CD14-positive monocyte (primary cell): ENCODE measurements at regions of chr19 and their contacts with region 1.

Region 1: GRCh38 chr19:56170261-56170660 is 5.5 kb upstream of the GALP start:
- DNase-seq: no peak
- H3K4me3 ChIP-seq: no peak overlapping the region
- H3K4me3 Mint-ChIP-seq: no peak overlapping the region
- H3K27ac ChIP-seq: no peak overlapping the region
- H3K27ac Mint-ChIP-seq: peak overlapping the region in 1 of 7 donors; percentile 38
- H3K4me1 ChIP-seq: no peaks in the 10 kb centered on the region
- H3K4me1 Mint-ChIP-seq: peaks cover 2% of the 10 kb centered on the region
- H3K27me3 ChIP-seq: no peaks in the 10 kb centered on the region
- H3K27me3 Mint-ChIP-seq: peaks cover 11 to 25% (median 12%) of the 10 kb centered on the region in 3 donors
- CTCF ChIP-seq: no peak

Region 2: DNA sequence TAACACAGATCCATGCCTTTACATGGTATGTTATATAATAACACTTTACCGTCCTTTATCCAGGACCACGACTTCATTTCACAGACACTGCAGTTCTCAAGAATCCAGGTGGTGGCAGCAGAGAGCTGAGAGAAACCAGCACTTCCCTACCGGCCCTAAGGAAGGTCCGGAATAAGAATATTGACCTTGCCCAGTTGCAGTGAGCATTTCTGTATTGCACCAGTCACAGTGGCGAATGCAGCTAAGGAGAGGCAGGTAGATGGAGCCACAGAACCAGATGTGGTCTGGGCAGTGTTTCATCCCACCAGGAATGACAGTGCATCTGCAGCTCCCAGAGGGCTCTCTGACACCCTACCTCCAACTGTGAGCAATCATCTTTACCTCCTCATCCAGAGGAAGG is 93.8 kb before region 1 on chr19:
- intact Hi-C with region 1: loop called (anchors 2 kb)
- DNase-seq: peak; percentile 34 to 56 (median 56)
- H3K4me3 ChIP-seq: no peak overlapping the region
- H3K4me3 Mint-ChIP-seq: no peak overlapping the region
- H3K27ac ChIP-seq: no peak overlapping the region
- H3K27ac Mint-ChIP-seq: no peak overlapping the region
- H3K4me1 ChIP-seq: peaks cover 9% of the 10 kb centered on the region in 2 donors
- H3K4me1 Mint-ChIP-seq: peaks cover 9% of the 10 kb centered on the region
- H3K27me3 ChIP-seq: no peaks in the 10 kb centered on the region
- H3K27me3 Mint-ChIP-seq: peaks cover 5 to 20% (median 11%) of the 10 kb centered on the region in 3 donors
- CTCF ChIP-seq: peak; percentile 94

Region 3: GRCh38 chr19:56105090-56105701 is 65.1 kb before region 1 on chr19:
- intact Hi-C with region 1: loop called in 1 of 2 experiments (anchors 2 kb)
- DNase-seq: peak; percentile 59 to 74 (median 62)
- H3K4me3 ChIP-seq: no peak overlapping the region
- H3K4me3 Mint-ChIP-seq: peak overlapping the region in 1 of 2 donors; percentile 24
- H3K27ac ChIP-seq: peak overlapping the region; percentile 37 to 66
- H3K27ac Mint-ChIP-seq: peak overlapping the region in 6 of 7 donors; percentile 13 to 81 (median 57)
- H3K4me1 ChIP-seq: peaks cover 24 to 44% of the 10 kb centered on the region in 2 donors
- H3K4me1 Mint-ChIP-seq: peaks cover 46% of the 10 kb centered on the region
- H3K27me3 ChIP-seq: no peaks in the 10 kb centered on the region
- H3K27me3 Mint-ChIP-seq: peaks cover 0 to 3% (median 2%) of the 10 kb centered on the region in 3 donors
- CTCF ChIP-seq: peak; percentile 85